ENCODE measurements at regions of chr10 and their contacts with region 1.

Region 1: DNA sequence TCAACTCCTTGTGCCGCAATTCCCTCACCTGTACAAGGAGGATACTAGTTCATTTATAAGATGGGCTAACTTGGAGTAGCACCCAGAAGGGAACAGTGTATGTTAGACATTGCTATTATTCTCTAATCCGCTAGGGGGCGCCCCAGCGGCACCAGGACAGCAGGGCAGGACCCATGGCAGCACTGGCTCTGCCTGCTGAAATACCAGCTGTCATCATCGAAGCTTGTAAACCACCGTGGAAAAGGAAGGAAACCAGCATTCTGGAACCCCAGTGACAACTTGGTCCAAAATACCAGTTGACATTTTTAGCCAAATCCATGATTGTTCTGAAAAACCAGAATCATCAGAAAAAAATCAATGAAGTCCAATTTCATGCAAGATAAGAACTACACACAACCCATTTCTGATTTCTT is 134.4 kb downstream of the ITGA8 start:
- DNase-seq: peak; percentile 46 to 48
- ATAC-seq: peak in 7 of 8 donors; percentile 72 to 92 (median 81)
- H3K4me3 ChIP-seq: no peak overlapping the region
- H3K27ac ChIP-seq: no peak overlapping the region
- H3K4me1 ChIP-seq: no peaks in the 10 kb centered on the region
- H3K27me3 ChIP-seq: no peaks in the 10 kb centered on the region
- CTCF ChIP-seq: peak; percentile 45 to 82 (median 74)

Region 2: GRCh38 chr10:15433850-15434537 is 151.3 kb before region 1 on chr10:
- intact Hi-C with region 1: loop called in 2 of 10 experiments (anchors 5 to 10 kb)
- DNase-seq: peak in 1 of 2 donors; percentile 57
- ATAC-seq: peak in 7 of 8 donors; percentile 38 to 87 (median 70)
- H3K4me3 ChIP-seq: peak overlapping the region in 7 of 10 donors; percentile 24 to 49 (median 41)
- H3K27ac ChIP-seq: no peak overlapping the region
- H3K4me1 ChIP-seq: peaks cover 0 to 7% (median 2%) of the 10 kb centered on the region in 9 donors
- H3K27me3 ChIP-seq: peaks cover 0 to 5% (median 0%) of the 10 kb centered on the region in 7 donors
- CTCF ChIP-seq: peak; percentile 69 to 86 (median 79)

Region 3: DNA sequence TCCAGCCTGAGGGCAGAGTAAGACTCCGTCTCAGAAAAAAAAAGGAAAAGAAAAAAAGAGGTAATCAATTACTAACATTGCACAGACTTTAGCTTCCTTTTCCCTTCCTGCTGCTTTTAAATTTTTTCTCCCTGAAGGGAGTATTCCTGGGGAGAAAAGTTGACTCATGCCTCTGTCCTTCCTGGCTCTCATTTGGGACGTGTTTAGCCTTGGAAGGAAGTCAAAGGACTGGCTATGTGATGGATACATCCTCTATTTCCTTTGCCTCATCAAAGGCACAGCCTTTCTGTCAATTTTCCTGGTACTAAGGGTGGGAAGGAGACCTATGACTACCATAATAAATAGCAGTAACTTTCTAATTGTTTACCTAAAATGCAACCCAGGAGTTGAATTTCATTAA is 56.8 kb after region 1 on chr10:
- intact Hi-C with region 1: loop called in 1 of 10 experiments (anchors 10 kb)
- DNase-seq: no peak
- ATAC-seq: peak in 4 of 8 donors; percentile 48 to 79 (median 62)
- H3K4me3 ChIP-seq: no peak overlapping the region
- H3K27ac ChIP-seq: no peak overlapping the region
- H3K4me1 ChIP-seq: no peaks in the 10 kb centered on the region
- H3K27me3 ChIP-seq: no peaks in the 10 kb centered on the region
- CTCF ChIP-seq: no peak

Region 4: GRCh38 chr10:15712883-15713282 is 127.6 kb after region 1 on chr10:
- intact Hi-C with region 1: loop called in 8 of 10 experiments (anchors 2 to 10 kb)
- DNase-seq: no peak
- ATAC-seq: no peak
- H3K4me3 ChIP-seq: no peak overlapping the region
- H3K27ac ChIP-seq: no peak overlapping the region
- H3K4me1 ChIP-seq: peaks cover 0 to 4% (median 0%) of the 10 kb centered on the region in 9 donors
- H3K27me3 ChIP-seq: peaks cover 0 to 19% (median 2%) of the 10 kb centered on the region in 7 donors
- CTCF ChIP-seq: no peak

Region 5: DNA sequence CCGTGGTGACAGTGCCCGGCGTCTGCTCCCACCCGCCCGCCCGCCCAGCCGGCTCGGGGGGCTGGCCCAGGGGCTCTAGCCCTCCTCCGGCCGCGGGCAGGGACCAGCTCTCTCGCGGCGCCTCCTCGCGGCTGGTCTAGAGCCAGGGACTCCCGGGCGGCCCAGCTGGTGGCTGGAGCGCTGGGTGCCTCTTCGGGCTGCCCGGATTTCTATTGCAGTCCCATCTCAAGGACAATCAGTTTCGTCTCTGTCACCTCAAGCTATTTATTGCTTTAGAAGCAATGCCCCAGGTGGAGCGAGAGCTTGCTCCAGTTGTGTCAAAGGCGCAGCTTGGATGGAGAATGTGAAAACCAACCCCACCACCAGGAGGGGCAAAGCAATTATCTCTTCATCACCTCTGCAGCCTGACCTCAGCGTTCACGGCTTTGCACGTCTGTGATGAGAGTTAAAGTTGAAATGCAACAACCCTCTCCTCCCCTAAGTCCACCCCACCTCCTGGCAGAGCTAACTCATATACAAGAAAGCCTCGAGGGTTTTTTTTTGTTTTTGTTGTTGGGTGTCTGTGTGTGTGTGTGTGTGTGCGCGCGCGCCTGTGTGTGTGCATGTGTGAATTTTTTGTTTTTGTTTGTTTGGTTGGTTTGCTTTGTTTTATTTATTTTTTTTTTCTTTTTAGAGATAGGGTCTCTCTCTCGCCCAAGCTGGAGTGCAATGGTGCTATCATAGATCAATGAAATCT is 134.8 kb after region 1 on chr10 and contains the start of gene ITGA8:
- intact Hi-C with region 1: loop called in 7 of 10 experiments (anchors 2 to 10 kb)
- DNase-seq: peak; percentile 37 to 38
- ATAC-seq: peak; percentile 55 to 77 (median 68)
- H3K4me3 ChIP-seq: peak within 1 kb of the TSS; percentile 31 to 61 (median 53)
- H3K27ac ChIP-seq: peak within 1 kb of the TSS in 4 of 10 donors; percentile 18 to 53 (median 29)
- H3K4me1 ChIP-seq: peaks cover 0 to 20% (median 8%) of the 10 kb centered on the region in 9 donors
- H3K27me3 ChIP-seq: peaks cover 8 to 62% (median 44%) of the 10 kb centered on the region in 7 donors
- CTCF ChIP-seq: peak in 8 of 9 donors; percentile 3 to 58 (median 38)
- total RNA-seq, gene ITGA8: 0.62 to 4.2 (median 2.1) TPM

Region 6: GRCh38 chr10:15725603-15726002 is 140.3 kb after region 1 on chr10:
- intact Hi-C with region 1: loop called in 1 of 10 experiments (anchors 10 kb)
- DNase-seq: no peak
- ATAC-seq: peak in 7 of 8 donors; percentile 51 to 82 (median 64)
- H3K4me3 ChIP-seq: no peak overlapping the region
- H3K27ac ChIP-seq: no peak overlapping the region
- H3K4me1 ChIP-seq: no peaks in the 10 kb centered on the region
- H3K27me3 ChIP-seq: peaks cover 0 to 16% (median 11%) of the 10 kb centered on the region in 7 donors
- CTCF ChIP-seq: peak; percentile 32 to 72 (median 54)

Region 7: GRCh38 chr10:15824498-15824897 is 239.2 kb after region 1 on chr10:
- intact Hi-C with region 1: loop called in 2 of 10 experiments (anchors 10 kb)
- DNase-seq: no peak
- ATAC-seq: no peak
- H3K4me3 ChIP-seq: no peak overlapping the region
- H3K27ac ChIP-seq: no peak overlapping the region
- H3K4me1 ChIP-seq: peaks cover 0 to 11% (median 0%) of the 10 kb centered on the region in 9 donors
- H3K27me3 ChIP-seq: no peaks in the 10 kb centered on the region
- CTCF ChIP-seq: peak; percentile 26 to 71 (median 55)

Measured in heart right ventricle (tissue), 16 donors.